Activated CD8-positive, alpha-beta T cell treated with anti-CD3 and anti-CD28 coated beads for 36 hours (primary cell): ENCODE measurements at regions of chr12 and their contacts with region 1.

Region 1: GRCh38 chr12:7859552-7859951 is 13.2 kb downstream of the SLC2A14 start:
- DNase-seq: no peak
- ATAC-seq: no peak
- H3K4me3 Mint-ChIP-seq: no peak overlapping the region
- H3K27ac Mint-ChIP-seq: no peak overlapping the region
- H3K4me1 Mint-ChIP-seq: peaks cover 17% of the 10 kb centered on the region
- H3K27me3 Mint-ChIP-seq: no peaks in the 10 kb centered on the region
- CTCF ChIP-seq: no peak

Region 2: GRCh38 chr12:7907009-7907408 is 47.5 kb after region 1 on chr12:
- CTCF ChIA-PET with region 1: interaction called, 10 read pairs
- POLR2A ChIA-PET with region 1: interaction called, 3 read pairs
- intact Hi-C with region 1: no loop called
- DNase-seq: peak; percentile 64
- ATAC-seq: peak; percentile 17
- H3K4me3 Mint-ChIP-seq: no peak overlapping the region
- H3K27ac Mint-ChIP-seq: no peak overlapping the region
- H3K4me1 Mint-ChIP-seq: no peaks in the 10 kb centered on the region
- H3K27me3 Mint-ChIP-seq: no peaks in the 10 kb centered on the region
- CTCF ChIP-seq: no peak

Region 3: DNA sequence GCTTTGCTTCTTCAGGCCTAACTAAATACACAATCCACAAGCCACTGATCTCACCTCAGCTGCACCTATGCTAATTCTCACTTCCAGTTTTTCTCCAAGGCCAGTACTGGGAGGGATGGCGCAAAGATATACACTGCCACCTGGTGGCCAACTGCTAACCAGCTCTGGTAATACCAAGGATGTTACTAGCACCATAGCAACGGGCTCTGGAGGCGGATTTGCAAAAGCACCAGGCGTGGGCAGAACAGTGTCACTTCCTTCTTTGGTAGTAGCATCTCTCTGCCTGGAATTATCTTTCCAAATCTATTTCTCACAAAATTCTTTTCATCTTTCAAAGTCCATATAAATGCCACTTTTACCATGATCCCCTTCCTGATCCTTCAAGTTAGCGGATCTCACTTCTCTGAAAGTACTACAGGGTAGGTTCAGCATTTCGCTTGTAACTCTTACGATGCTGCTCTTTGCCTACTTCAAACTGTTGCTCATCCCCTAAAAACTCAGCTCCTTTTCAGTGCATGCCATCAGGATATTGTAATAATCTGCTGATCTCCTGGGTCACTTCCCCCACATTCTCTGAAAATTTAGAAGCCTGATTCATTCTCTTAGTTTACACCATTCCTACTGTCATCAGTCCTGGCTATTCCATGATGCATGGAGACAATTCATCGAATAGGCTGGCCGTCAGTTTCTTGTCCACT is 135.9 kb after region 1 on chr12:
- CTCF ChIA-PET with region 1: interaction called, 36 read pairs
- POLR2A ChIA-PET with region 1: no interaction called
- intact Hi-C with region 1: loop called (anchors 1 kb)
- DNase-seq: peak; percentile 96
- ATAC-seq: peak; percentile 90
- H3K4me3 Mint-ChIP-seq: no peak overlapping the region
- H3K27ac Mint-ChIP-seq: no peak overlapping the region
- H3K4me1 Mint-ChIP-seq: peaks cover 22% of the 10 kb centered on the region
- H3K27me3 Mint-ChIP-seq: no peaks in the 10 kb centered on the region
- CTCF ChIP-seq: peak; percentile 82

Region 4: GRCh38 chr12:8746046-8746445 is 886.5 kb after region 1 on chr12:
- CTCF ChIA-PET with region 1: no interaction called
- POLR2A ChIA-PET with region 1: no interaction called
- intact Hi-C with region 1: no loop called
- DNase-seq: no peak
- ATAC-seq: no peak
- H3K4me3 Mint-ChIP-seq: no peak overlapping the region
- H3K27ac Mint-ChIP-seq: no peak overlapping the region
- H3K4me1 Mint-ChIP-seq: no peaks in the 10 kb centered on the region
- H3K27me3 Mint-ChIP-seq: no peaks in the 10 kb centered on the region
- CTCF ChIP-seq: no peak